Activated CD4-positive, alpha-beta T cell treated with anti-CD3 and anti-CD28 coated beads for 36 hours (primary cell): ENCODE measurements at regions of chr2 and their contacts with region 1.

Region 1: DNA sequence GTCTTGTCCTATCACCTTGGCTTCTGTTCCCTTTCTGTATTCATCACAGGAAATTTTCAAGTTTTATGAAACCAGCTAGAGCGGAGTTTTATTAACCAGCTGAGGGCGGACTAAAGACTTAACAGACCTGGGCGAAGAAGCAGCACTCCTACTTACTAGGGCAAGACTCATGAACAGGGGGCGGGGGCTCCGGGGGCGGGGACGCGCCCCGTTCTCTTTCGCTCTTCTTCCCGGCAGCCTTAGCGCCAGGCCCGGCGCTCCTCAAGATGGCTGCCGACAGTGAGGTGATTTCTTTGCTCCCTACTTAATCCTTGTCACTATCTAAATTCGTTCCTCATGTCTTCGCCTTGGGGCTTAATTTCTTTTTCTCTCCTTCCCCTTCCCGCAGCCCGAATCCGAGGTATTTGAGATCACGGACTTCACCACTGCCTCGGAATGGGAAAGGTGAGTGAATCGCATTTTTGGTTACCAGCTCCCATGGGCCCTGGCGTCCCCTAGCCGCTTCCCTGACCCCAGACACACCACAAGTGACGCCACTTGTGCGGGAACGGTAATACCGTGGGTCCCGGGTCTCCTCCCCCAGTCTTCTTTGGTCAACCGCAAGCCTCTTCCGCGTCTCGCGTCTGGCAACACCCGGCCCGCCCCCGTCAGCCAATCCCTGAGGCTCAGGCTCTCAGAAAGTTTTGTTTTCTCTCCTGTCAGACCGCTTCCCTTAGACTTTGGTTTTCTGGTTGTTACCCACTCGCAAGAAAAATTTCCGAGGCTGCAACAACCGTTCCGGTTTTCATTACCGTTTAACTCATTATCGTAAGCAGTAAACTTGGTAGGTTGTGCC is at the start of gene RAB3GAP1:
- DNase-seq: peak; percentile 96
- ATAC-seq: peak; percentile 79
- H3K4me3 Mint-ChIP-seq: peak within 1 kb of the TSS; percentile 92
- H3K27ac Mint-ChIP-seq: peak within 1 kb of the TSS; percentile 100
- H3K4me1 Mint-ChIP-seq: peaks cover 40% of the 10 kb centered on the region
- H3K27me3 Mint-ChIP-seq: no peaks in the 10 kb centered on the region
- total RNA-seq, gene RAB3GAP1: 34.5 to 39.8 TPM

Region 2: DNA sequence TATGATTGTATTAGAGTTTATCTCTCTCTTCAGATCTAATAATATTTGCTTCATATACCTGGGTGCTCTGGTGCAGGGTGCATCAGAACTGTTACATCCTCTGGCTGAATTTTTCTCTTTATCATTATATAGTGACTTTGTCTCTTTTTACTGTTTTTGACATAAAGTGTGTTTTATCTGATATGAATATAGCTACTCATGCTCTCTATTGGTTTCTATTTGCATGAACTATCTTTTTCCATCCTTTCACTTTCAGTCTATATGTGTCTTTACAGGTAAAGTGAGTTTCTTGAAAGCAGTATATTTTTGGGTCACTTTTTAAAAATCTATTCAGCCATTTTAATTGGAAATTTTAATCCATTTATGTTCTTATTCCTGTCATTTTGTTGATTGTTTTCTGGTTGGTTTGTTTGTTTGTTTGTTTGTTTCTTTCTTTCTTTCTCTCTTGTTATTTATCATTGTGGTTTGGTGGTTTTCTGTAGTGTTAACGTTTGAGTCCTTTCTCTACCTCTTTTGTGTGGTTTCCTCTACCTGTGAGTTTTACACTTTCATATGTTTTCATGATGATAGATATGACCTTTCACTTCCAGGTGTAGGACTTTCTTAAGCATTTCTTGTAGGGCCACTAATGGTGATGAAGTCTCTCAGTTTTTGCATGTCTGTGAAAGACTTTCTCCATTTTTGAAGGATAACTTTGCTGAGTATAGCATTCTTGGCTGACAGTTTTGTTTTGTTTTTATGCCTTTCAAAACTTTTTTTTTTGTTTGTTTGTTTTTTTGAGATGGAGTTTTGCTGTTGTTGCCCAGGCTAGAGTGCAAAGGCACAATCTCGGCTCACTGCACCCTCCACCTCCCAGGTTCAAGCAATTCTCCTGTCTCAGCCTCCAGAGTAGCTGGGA is 78.8 kb before region 1 on chr2:
- CTCF ChIA-PET with region 1: interaction called, 3 read pairs
- POLR2A ChIA-PET with region 1: no interaction called
- intact Hi-C with region 1: loop called (anchors 1 kb)
- DNase-seq: no peak
- ATAC-seq: peak; percentile 81
- H3K4me3 Mint-ChIP-seq: peak overlapping the region; percentile 12
- H3K27ac Mint-ChIP-seq: peak overlapping the region; percentile 24
- H3K4me1 Mint-ChIP-seq: peaks cover 15% of the 10 kb centered on the region
- H3K27me3 Mint-ChIP-seq: no peaks in the 10 kb centered on the region

Region 3: DNA sequence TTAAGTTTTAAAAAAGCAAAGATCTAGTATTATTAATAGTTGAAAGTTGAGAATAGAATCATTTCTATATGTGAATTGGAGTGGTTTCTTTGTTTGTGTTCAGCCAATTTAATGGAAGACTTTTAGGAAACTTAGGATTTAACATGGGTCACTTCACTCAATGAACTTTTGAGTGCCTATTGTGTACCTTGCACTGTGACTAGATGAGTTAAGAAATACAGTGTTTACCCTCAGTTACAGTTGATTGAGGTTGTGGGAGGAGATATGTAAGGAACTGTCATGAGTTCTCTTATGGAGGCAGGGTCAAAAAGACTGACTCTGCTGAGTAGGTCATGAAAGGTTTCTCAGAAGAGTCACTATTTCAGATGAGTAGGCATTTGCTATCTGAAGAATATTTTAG is 98.4 kb after region 1 on chr2:
- CTCF ChIA-PET with region 1: no interaction called
- POLR2A ChIA-PET with region 1: no interaction called
- intact Hi-C with region 1: loop called in 1 of 2 experiments (anchors 10 kb)
- DNase-seq: no peak
- ATAC-seq: peak; percentile 26
- H3K4me3 Mint-ChIP-seq: no peak overlapping the region
- H3K27ac Mint-ChIP-seq: no peak overlapping the region
- H3K4me1 Mint-ChIP-seq: peaks cover 26% of the 10 kb centered on the region
- H3K27me3 Mint-ChIP-seq: no peaks in the 10 kb centered on the region

Region 4: GRCh38 chr2:135615404-135615803 is 563.1 kb after region 1 on chr2:
- CTCF ChIA-PET with region 1: no interaction called
- POLR2A ChIA-PET with region 1: no interaction called
- intact Hi-C with region 1: loop called in 1 of 2 experiments (anchors 2 kb)
- DNase-seq: no peak
- ATAC-seq: no peak
- H3K4me3 Mint-ChIP-seq: no peak overlapping the region
- H3K27ac Mint-ChIP-seq: no peak overlapping the region
- H3K4me1 Mint-ChIP-seq: peaks cover 8% of the 10 kb centered on the region
- H3K27me3 Mint-ChIP-seq: no peaks in the 10 kb centered on the region

Region 5: GRCh38 chr2:135876066-135876711 is 823.9 kb after region 1 on chr2 and contains the start of gene MCM6:
- CTCF ChIA-PET with region 1: no interaction called
- POLR2A ChIA-PET with region 1: no interaction called
- intact Hi-C with region 1: loop called in 1 of 2 experiments (anchors 2 kb)
- DNase-seq: peak; percentile 100
- ATAC-seq: peak; percentile 88
- H3K4me3 Mint-ChIP-seq: peak within 1 kb of the TSS; percentile 86
- H3K27ac Mint-ChIP-seq: peak within 1 kb of the TSS; percentile 96
- H3K4me1 Mint-ChIP-seq: peaks cover 44% of the 10 kb centered on the region
- H3K27me3 Mint-ChIP-seq: no peaks in the 10 kb centered on the region
- total RNA-seq, gene MCM6: 228 to 276 TPM

Region 6: DNA sequence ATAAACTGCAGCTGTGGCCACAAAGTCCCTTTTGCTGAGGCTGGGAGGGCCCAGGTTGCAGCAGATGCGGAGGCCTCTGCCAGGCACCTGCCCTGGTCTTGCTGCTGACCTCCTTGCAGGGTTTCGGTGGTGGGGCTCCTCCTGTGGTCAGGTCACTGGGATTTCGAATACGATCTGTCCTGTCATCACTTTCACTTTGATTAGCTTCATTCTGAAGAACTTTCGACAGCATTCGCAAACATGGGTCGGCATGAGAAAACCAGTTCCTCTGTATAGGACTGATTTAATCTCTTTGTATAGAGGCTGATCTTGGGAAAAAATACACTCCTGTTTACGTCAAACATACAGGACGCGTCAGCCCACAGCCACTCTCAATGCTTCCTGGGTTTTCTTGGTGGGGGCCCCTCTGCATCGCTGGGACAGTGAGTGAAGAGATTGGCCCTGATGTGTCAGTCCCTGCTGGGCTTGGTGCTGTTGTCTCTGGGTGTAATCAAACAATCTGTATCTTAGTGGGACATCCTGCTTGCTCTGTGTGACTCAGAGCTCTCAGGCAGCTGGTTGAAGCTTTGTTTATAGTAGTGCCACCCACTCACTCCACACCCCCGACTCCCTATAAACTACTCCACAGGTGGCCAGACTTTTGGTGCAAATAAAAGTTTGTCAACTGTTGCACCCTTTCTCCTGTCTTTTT is 1275.0 kb after region 1 on chr2:
- CTCF ChIA-PET with region 1: no interaction called
- POLR2A ChIA-PET with region 1: no interaction called
- intact Hi-C with region 1: loop called in 1 of 2 experiments (anchors 1 kb)
- DNase-seq: peak; percentile 88
- ATAC-seq: peak; percentile 95
- H3K4me3 Mint-ChIP-seq: peak overlapping the region; percentile 56
- H3K27ac Mint-ChIP-seq: peak overlapping the region; percentile 92
- H3K4me1 Mint-ChIP-seq: peaks cover 69% of the 10 kb centered on the region
- H3K27me3 Mint-ChIP-seq: no peaks in the 10 kb centered on the region